ENCODE measurements at regions of chr15 and their contacts with region 1.

Region 1: DNA sequence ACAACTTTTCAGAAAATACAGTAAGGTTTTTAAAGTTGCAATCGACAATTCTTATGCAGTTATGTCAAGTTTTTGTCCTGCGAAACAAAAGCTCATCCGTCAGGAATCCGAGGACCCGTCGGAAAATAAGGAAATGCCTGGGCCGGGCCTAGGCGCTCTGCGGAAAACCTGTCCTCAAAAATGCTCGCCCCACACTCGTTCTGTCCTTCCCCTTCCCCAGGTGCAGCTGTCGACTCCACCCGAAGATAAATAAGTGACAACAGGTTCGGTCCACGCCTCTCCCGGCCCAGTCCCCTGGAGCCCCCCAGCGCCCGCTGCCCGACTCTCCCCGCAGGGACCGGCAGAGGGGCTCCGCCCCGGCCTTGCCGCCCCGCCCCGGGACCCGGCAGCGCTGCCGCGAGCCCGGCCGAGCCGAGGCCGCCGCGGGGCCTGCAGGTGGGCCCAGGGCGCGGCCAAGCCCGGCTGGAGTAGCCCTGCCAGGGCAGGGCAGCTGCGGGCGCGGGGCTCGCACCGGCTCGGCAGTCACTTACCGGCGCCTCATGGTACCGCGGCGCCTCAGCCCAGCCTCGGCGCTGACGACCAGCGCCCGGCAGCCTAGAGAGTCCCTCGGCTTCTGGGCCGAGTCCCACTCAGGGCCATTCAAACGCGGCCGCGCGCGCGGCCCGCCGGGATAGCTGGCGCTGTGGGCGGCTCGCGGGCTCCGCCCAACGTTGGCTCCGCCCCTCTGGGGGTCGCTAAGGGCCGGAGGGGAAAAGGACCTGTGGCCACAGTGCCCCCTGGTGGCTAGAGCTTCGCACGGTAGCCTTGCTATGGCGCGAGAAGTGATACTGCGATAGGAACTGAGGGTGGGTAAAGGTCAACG is at the start of gene KATNBL1:
- DNase-seq: peak; percentile 96
- H3K4me3 ChIP-seq: peak within 1 kb of the TSS; percentile 79
- H3K27ac ChIP-seq: peak within 1 kb of the TSS; percentile 90
- H3K4me1 ChIP-seq: peaks cover 21% of the 10 kb centered on the region
- H3K27me3 ChIP-seq: no peaks in the 10 kb centered on the region
- CTCF ChIP-seq: peak; percentile 95
- total RNA-seq, gene KATNBL1: 14.9 TPM

Region 2: DNA sequence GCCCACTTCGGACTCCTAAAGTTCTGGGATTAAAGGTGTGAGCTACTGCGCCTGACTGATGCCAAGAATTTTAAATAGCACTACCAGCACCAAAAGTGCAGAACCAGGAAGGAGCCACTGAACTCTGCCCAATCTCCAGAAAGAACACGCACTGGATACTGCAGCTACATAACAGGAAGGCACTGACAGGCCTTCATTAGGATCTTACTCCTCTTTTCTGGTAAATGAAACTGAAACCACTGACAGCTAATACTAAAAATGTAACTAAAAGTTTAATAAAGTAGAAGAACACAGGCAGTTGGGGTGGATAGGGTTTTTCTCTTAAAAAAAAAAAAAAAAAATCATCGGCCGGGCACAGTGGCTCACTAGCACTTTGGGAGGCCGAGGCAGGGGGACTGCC is 315.5 kb before region 1 on chr15:
- intact Hi-C with region 1: no loop called
- DNase-seq: no peak
- H3K4me3 ChIP-seq: no peak overlapping the region
- H3K27ac ChIP-seq: no peak overlapping the region
- H3K4me1 ChIP-seq: no peaks in the 10 kb centered on the region
- H3K27me3 ChIP-seq: no peaks in the 10 kb centered on the region
- CTCF ChIP-seq: no peak

Region 3: DNA sequence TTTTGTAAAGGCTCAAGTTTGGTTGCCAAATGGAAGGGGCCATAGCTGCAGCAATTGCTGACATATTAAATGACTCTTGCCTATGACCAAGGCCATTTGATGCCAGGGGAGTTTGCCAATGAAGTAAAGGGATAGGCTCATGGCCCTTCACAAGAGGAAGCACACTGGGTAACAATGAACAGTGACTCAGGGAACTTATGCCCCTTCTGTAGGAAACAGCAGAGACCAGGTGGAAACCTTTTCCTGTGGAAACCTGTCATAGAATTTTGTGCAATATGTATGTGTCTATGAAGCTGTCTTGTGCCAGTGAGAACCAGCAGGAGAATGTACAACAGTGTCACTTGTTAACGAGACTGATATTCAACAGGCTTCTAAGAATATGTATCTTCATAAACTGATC is 145.2 kb before region 1 on chr15:
- intact Hi-C with region 1: loop called (anchors 5 kb)
- DNase-seq: no peak
- H3K4me3 ChIP-seq: no peak overlapping the region
- H3K27ac ChIP-seq: no peak overlapping the region
- H3K4me1 ChIP-seq: no peaks in the 10 kb centered on the region
- H3K27me3 ChIP-seq: no peaks in the 10 kb centered on the region
- CTCF ChIP-seq: no peak